Activated CD8-positive, alpha-beta T cell treated with anti-CD3 and anti-CD28 coated beads for 36 hours (primary cell): ENCODE measurements at regions of chr14 and their contacts with region 1.

Region 1: GRCh38 chr14:91299121-91300115 is 54.9 kb upstream of the GPR68 start:
- DNase-seq: peak; percentile 85
- ATAC-seq: peak; percentile 11
- H3K4me3 Mint-ChIP-seq: no peak overlapping the region
- H3K27ac Mint-ChIP-seq: peak overlapping the region; percentile 96
- H3K4me1 Mint-ChIP-seq: peaks cover 56% of the 10 kb centered on the region
- H3K27me3 Mint-ChIP-seq: no peaks in the 10 kb centered on the region
- CTCF ChIP-seq: no peak

Region 2: GRCh38 chr14:91219517-91220389 is 79.7 kb before region 1 on chr14:
- CTCF ChIA-PET with region 1: no interaction called
- POLR2A ChIA-PET with region 1: no interaction called
- intact Hi-C with region 1: no loop called
- DNase-seq: no peak
- ATAC-seq: no peak
- H3K4me3 Mint-ChIP-seq: no peak overlapping the region
- H3K27ac Mint-ChIP-seq: peak overlapping the region; percentile 28
- H3K4me1 Mint-ChIP-seq: peaks cover 35% of the 10 kb centered on the region
- H3K27me3 Mint-ChIP-seq: no peaks in the 10 kb centered on the region
- CTCF ChIP-seq: no peak

Region 3: DNA sequence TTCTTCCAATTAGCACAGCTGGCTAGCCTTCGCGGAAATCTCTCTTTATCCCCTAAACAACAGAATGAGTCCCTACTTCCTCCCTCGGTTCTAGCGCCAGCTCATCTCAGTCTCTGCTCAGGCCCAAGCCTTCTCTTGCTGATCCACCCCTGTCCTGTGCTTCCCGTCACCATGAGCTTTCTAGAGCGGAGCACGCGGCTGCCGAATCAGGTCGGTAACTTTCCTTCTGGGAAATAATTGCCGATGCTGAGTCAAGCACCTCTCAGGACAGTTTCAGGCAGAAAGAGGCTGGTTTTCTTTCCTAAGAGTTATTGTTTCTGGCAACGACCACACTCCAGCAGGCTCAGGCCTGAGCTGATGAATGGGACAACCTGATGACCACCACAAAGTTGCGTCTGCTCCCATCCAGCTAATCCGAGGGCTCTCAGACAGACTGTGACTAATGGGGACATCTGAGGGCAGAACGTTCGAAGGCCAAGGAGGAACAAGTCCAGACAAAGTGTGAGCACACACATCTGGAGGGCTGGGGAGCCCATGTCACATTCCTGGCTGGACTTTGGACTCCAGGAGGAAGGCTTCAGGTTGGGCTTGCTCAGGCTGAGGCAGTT is 41.3 kb before region 1 on chr14:
- CTCF ChIA-PET with region 1: no interaction called
- POLR2A ChIA-PET with region 1: no interaction called
- intact Hi-C with region 1: no loop called
- DNase-seq: no peak
- ATAC-seq: no peak
- H3K4me3 Mint-ChIP-seq: no peak overlapping the region
- H3K27ac Mint-ChIP-seq: no peak overlapping the region
- H3K4me1 Mint-ChIP-seq: peaks cover 54% of the 10 kb centered on the region
- H3K27me3 Mint-ChIP-seq: peaks cover 1% of the 10 kb centered on the region
- CTCF ChIP-seq: no peak

Region 4: DNA sequence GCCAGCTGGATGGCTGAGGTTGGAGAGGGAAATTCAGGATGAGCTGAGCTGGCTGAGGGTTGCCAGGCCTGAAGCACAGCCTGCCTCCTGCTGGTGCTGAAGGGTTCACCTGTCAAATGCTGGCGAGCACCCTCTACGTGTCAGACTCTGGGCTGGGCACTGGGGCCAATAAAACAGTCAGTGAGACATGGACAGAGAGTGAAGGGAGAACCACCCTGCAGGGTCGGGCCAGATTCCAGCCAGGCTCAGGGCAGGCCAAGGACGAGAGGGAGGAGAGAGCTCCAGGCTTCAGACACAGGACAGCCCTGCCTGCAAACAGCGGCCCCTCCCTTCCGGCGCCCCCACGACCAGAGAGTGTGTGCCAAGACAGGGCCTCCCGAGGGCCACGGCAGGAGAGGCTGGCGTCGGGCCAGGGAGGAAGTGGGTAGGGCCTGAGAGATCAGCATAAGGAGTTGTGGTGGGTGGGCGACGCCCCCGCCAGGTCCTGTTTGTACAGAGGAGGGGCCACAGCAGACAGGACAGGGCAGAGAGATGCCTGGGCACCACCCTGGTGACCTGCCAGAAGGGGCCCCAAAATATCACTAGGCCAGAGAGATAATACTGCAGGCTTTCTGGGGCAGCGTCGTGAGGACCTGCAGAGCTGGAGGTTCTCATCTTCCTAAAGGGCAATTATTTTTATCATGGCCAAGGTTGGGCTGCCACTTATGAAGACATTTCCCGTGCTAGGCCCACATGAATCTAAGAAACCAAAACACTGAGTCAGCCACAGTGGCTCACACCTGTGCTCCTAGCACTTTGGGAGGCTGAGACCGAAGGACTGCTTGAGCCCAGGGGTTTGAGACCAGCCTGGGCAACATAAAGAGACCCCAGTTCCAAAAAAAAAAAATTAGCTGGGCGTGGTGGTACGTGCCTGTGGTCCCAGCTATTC is 18.2 kb after region 1 on chr14:
- CTCF ChIA-PET with region 1: interaction called, 5 read pairs
- POLR2A ChIA-PET with region 1: interaction called, 10 read pairs
- intact Hi-C with region 1: no loop called
- DNase-seq: peak; percentile 97
- ATAC-seq: peak; percentile 65
- H3K4me3 Mint-ChIP-seq: peak overlapping the region; percentile 64
- H3K27ac Mint-ChIP-seq: peak overlapping the region; percentile 97
- H3K4me1 Mint-ChIP-seq: peaks cover 84% of the 10 kb centered on the region
- H3K27me3 Mint-ChIP-seq: no peaks in the 10 kb centered on the region
- CTCF ChIP-seq: peak; percentile 54

Region 5: DNA sequence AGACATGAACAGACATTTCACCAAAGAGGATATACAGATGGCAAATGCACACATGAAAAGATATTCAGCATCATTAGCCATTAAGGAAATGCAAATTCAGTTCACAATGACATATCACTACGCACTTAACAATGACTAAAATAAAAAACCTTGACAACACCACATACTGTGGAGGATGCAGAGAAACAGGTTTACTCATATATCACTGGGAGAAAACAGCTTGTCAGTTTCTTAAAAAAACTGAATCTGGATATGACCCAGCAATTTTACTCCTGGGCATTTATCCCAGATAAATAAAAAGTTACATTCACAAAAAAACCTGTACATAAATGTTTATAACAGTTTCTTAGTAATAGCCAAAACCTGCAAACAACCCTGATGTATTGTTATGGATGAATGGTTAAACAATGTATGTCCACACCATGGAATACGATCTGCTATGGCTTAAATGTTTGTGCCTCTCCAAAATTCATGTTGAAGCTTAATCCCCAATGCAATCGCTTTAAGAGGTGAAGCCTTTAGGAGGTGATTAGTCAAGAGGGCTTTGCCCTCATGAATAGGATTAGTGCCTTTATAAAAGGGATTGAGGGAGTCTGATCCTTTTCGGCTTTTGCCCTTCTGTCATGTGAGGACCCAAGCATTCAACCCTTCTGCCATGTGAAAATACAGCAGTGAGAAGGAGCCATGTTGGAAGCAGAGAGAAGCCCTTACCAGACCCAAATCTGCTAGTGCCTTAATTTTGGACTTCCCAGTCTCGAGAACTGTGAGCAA is 246.7 kb after region 1 on chr14:
- CTCF ChIA-PET with region 1: no interaction called
- POLR2A ChIA-PET with region 1: no interaction called
- intact Hi-C with region 1: no loop called
- DNase-seq: no peak
- ATAC-seq: no peak
- H3K4me3 Mint-ChIP-seq: no peak overlapping the region
- H3K27ac Mint-ChIP-seq: no peak overlapping the region
- H3K4me1 Mint-ChIP-seq: no peaks in the 10 kb centered on the region
- H3K27me3 Mint-ChIP-seq: peaks cover 3% of the 10 kb centered on the region
- CTCF ChIP-seq: no peak